Motor neuron (in vitro differentiated cells): ENCODE measurements at regions of chr2 and their contacts with region 1.

Region 1: DNA sequence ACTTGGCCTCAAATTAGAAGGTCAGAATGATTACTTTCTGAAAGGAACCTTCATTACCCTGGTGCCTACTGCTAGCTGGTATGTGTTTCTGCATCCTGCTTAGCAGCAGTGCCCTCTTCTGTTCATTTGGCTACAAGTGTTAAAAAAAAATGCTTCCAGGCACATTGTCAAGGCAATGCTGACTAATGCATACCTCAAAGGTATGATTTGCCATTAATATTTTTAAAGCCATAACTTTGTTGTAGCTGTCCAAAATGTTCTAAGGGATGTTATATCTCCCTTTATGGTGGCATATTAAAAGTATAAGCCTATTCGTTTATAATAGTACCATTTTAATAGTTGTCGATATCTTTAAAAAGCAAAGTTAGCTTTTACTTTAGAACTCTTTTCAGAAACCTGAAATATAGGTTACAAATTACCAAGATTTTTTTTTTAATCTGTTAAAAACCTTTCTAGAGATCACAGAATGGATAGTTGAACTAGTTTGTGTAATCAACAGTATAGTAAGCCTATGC is 52.0 kb upstream of the FAM171B start:
- ATAC-seq: peak; percentile 47 to 95 (median 72)
- H3K4me3 ChIP-seq: no peak overlapping the region
- H3K27ac ChIP-seq: no peak overlapping the region
- H3K4me1 ChIP-seq: no peaks in the 10 kb centered on the region

Region 2: GRCh38 chr2:186503848-186504606 is 137.8 kb before region 1 on chr2:
- in situ Hi-C with region 1: loop called in 5 of 9 experiments (anchors 10 to 25 kb)
- ATAC-seq: peak in 3 of 8 experiments; percentile 17 to 53 (median 40)
- H3K4me3 ChIP-seq: no peak overlapping the region
- H3K27ac ChIP-seq: no peak overlapping the region
- H3K4me1 ChIP-seq: no peaks in the 10 kb centered on the region